HAP-1 (cell line): ENCODE measurements at regions of chr17 and their contacts with region 1.

Region 1: DNA sequence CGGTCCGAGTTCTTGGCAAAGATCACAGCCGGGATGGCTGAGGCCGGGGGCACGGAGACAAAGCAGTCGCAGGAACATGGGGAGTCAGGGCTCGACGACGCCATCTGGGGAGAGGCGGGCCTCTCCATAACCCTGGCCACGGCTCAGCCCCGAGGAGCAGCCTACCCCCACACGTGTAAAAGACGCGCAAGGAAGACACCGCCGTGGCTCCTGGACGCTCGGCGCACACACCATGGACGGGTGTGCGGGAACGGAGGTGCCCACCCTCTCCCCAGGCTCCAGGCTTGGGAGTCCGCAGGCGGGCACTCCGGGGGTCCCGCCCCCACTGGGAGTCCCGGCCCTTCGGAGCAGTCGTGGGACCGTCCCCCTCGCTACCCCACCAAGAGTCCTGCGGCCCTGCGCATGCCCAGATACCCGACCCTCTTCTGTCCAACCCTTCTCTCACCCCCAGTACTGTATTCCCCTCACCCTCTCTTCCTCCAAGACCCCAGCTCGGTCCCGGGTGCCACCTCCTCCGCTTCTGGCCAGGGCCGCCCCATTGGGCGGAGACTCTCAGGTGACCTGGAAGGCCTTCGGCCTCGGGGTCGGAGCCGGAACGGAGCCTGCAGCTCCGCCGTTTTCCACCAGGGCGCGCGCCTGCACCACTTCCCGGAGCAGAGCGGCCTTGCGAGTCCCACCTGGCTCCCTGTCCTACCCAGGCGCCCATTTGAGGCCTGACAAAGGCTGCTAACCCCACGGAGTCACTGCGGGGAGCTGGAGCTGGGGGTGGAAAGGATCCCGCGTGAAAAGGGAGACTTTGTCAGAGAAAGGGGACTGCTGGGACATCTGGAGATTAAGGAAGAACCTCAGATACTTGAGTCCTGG is at the start of gene SCRN2:
- DNase-seq: peak; percentile 83 to 95
- H3K4me3 ChIP-seq: peak within 1 kb of the TSS; percentile 56
- H3K4me1 ChIP-seq: peaks cover 8% of the 10 kb centered on the region
- H3K27me3 ChIP-seq: peaks cover 17% of the 10 kb centered on the region

Region 2: GRCh38 chr17:47889734-47890529 is 49.0 kb after region 1 on chr17:
- in situ Hi-C with region 1: loop called (anchors 5 kb)
- DNase-seq: peak; percentile 65 to 93
- H3K4me3 ChIP-seq: no peak overlapping the region
- H3K4me1 ChIP-seq: no peaks in the 10 kb centered on the region
- H3K27me3 ChIP-seq: 0 out of 2 replicates have a peak, but pooled peaks cover 3% of the 10 kb centered on the region